ENCODE measurements at regions of chr9 and their contacts with region 1.

Region 1: GRCh38 chr9:114906908-114907571 is 23.4 kb downstream of the TNFSF8 start:
- DNase-seq: peak; percentile 48
- ATAC-seq: peak; percentile 22
- H3K4me3 Mint-ChIP-seq: no peak overlapping the region
- H3K27ac Mint-ChIP-seq: peak overlapping the region; percentile 96
- H3K4me1 Mint-ChIP-seq: peaks cover 47% of the 10 kb centered on the region
- H3K27me3 Mint-ChIP-seq: no peaks in the 10 kb centered on the region
- CTCF ChIP-seq: peak; percentile 63

Region 2: DNA sequence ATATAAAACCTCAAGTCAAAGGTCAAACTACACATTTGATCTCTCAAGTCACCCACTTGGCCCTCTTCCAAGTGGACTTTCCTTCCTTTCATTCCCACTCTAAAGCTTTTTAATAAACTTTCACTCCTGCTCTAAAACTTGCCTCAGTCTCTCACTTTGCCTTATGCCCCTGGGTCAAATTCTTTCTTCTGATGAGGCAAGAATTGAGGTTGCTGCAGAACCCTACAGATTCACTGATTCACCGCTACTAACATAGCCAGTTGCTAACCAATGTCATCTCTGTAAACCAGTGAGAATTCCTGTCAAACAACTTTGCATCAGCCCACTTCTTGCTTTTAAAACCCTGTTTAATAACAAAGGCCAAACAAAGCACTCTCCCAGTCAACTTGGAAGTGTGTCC is 326.3 kb before region 1 on chr9:
- CTCF ChIA-PET with region 1: no interaction called
- POLR2A ChIA-PET with region 1: no interaction called
- intact Hi-C with region 1: no loop called
- DNase-seq: no peak
- ATAC-seq: no peak
- H3K4me3 Mint-ChIP-seq: no peak overlapping the region
- H3K27ac Mint-ChIP-seq: no peak overlapping the region
- H3K4me1 Mint-ChIP-seq: no peaks in the 10 kb centered on the region
- H3K27me3 Mint-ChIP-seq: no peaks in the 10 kb centered on the region
- CTCF ChIP-seq: no peak

Region 3: GRCh38 chr9:114674798-114675540 is 232.1 kb before region 1 on chr9:
- CTCF ChIA-PET with region 1: interaction called, 188 read pairs
- POLR2A ChIA-PET with region 1: no interaction called
- intact Hi-C with region 1: no loop called
- DNase-seq: no peak
- ATAC-seq: peak; percentile 27
- H3K4me3 Mint-ChIP-seq: no peak overlapping the region
- H3K27ac Mint-ChIP-seq: no peak overlapping the region
- H3K4me1 Mint-ChIP-seq: peaks cover 42% of the 10 kb centered on the region
- H3K27me3 Mint-ChIP-seq: peaks cover 11% of the 10 kb centered on the region
- CTCF ChIP-seq: no peak

Region 4: DNA sequence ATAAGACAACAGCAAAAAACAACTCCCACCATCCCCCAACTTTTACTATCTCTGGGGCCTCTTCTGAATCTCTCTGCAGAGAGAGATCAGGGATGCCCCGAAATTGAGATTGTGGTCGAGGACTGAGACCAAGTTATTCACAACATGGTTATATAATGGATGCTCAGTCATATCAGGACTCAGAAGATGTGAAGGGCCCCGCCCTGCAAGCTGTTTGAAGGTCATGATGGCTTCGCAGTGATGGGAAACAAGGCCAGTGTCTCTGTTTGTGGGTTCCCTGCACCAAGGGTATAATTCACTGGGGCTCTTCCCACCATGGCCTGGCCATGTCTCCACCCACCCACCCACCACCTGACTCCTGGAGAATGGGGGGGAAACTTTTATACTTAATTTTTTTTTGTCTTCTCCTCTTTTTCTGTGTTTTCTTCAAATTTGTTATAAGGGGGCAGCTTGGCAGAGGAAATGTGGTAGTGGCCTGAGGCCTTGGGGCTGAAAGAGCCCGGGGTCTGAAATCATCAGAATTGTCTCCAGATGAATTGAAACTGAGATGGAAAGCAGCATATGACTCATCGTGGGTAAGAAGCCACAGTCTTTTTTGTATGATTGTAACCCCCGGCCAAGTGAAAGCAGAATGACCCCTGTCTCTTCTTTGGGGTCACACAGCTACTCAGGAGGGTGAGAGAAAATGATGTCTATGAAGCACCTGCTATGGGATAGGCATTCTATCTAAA is 210.1 kb before region 1 on chr9:
- CTCF ChIA-PET with region 1: interaction called, 11 read pairs
- POLR2A ChIA-PET with region 1: interaction called, 11 read pairs
- intact Hi-C with region 1: loop called (anchors 5 kb)
- DNase-seq: peak; percentile 94
- ATAC-seq: peak; percentile 67
- H3K4me3 Mint-ChIP-seq: peak overlapping the region; percentile 63
- H3K27ac Mint-ChIP-seq: peak overlapping the region; percentile 95
- H3K4me1 Mint-ChIP-seq: peaks cover 78% of the 10 kb centered on the region
- H3K27me3 Mint-ChIP-seq: no peaks in the 10 kb centered on the region
- CTCF ChIP-seq: no peak

Region 5: DNA sequence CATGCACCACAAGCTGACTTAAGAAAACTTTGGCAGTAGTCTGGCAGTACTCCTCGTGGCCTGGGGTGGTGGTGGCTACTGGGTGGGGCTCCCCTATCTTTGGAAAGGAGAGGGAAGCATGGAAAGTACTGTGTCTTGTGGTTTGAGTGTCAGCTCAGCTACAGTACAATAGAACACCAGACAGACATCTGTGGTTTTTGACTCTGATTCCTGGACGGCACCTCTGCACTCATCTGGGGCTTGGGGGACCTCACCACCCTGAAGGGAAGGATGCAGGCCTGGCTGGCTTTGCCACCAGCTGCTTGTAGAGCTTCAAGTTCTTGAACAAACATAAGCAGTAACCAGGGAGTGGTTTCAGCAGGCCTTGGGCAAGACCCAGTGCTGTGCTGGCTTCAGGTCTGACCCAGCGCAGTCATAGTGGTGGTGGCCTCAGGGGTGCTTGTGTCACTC is 17.2 kb before region 1 on chr9:
- CTCF ChIA-PET with region 1: interaction called, 15 read pairs
- POLR2A ChIA-PET with region 1: interaction called, 5 read pairs
- intact Hi-C with region 1: no loop called
- DNase-seq: peak; percentile 58
- ATAC-seq: peak; percentile 58
- H3K4me3 Mint-ChIP-seq: no peak overlapping the region
- H3K27ac Mint-ChIP-seq: peak overlapping the region; percentile 67
- H3K4me1 Mint-ChIP-seq: peaks cover 63% of the 10 kb centered on the region
- H3K27me3 Mint-ChIP-seq: no peaks in the 10 kb centered on the region
- CTCF ChIP-seq: no peak

Region 6: GRCh38 chr9:114919611-114920010 is 12.6 kb after region 1 on chr9:
- CTCF ChIA-PET with region 1: interaction called, 27 read pairs
- POLR2A ChIA-PET with region 1: interaction called, 8 read pairs
- intact Hi-C with region 1: no loop called
- DNase-seq: peak; percentile 43
- ATAC-seq: peak; percentile 77
- H3K4me3 Mint-ChIP-seq: peak overlapping the region; percentile 11
- H3K27ac Mint-ChIP-seq: peak overlapping the region; percentile 83
- H3K4me1 Mint-ChIP-seq: peaks cover 85% of the 10 kb centered on the region
- H3K27me3 Mint-ChIP-seq: no peaks in the 10 kb centered on the region
- CTCF ChIP-seq: no peak

Region 7: DNA sequence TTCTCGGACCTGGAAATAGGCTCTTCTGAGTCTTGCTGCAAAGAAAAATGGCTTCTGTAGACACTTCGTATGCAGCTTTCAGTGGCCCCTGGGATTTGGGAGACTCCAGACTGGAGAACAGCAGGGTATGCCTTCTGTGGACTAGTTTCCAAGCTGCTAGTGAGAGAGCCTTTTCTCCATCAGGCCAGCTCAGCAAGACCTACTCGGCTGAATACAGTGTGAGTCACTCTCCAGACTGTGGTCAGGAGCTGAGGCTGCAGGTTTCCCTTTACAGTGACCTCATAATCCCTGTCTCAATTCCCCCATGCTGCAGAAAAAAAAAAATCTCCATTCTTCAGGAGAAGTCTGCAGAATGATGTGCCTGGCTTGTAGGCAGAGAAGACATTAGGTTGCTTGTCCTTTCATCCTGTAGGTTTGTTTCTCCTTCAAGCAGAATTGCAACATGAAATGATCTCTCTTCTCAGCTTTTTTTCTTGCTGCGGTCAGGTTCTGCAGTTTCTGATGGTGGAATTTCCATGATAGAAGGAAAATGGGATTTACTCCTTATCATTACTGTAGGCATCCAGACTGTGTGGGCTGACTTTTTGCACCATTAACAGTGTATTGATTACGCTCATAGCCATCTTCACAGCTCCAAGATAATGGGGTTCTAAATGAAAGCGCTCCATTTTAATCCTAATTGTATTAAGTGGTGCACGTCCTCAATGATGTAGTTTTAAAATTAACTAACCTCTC is 101.7 kb after region 1 on chr9:
- CTCF ChIA-PET with region 1: interaction called, 77 read pairs
- POLR2A ChIA-PET with region 1: interaction called, 3 read pairs
- intact Hi-C with region 1: loop called (anchors 5 kb)
- DNase-seq: peak; percentile 38
- ATAC-seq: peak; percentile 48
- H3K4me3 Mint-ChIP-seq: no peak overlapping the region
- H3K27ac Mint-ChIP-seq: no peak overlapping the region
- H3K4me1 Mint-ChIP-seq: peaks cover 63% of the 10 kb centered on the region
- H3K27me3 Mint-ChIP-seq: no peaks in the 10 kb centered on the region
- CTCF ChIP-seq: no peak